PC-3 (cell line): ENCODE measurements at regions of chrX and their contacts with region 1.

Region 1: DNA sequence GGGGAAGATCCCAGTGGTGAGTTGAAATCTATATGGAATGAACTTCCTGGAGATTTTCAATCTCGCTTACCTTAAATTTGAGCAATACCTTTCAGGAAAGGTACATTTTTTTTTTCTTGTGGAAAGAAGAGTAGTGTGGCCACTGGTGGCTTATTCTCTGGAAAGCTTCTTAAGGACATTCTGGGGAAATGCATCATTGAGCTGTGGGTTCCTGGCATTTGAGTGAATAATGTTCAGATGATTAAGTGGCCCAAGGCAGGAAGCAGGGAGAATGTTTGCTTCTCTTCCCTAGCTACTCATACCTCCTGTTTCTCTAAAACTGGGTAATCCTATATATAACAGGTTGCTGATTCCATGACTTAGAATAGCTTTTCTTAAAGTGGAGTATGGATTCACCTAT is 31.8 kb downstream of the STAG2 start:
- DNase-seq: peak; percentile 76
- ATAC-seq: peak; percentile 81
- H3K4me3 ChIP-seq: no peak overlapping the region
- H3K27ac ChIP-seq: peak overlapping the region; percentile 55
- H3K4me1 ChIP-seq: peaks cover 29% of the 10 kb centered on the region
- H3K27me3 ChIP-seq: no peaks in the 10 kb centered on the region
- CTCF ChIP-seq: no peak

Region 2: DNA sequence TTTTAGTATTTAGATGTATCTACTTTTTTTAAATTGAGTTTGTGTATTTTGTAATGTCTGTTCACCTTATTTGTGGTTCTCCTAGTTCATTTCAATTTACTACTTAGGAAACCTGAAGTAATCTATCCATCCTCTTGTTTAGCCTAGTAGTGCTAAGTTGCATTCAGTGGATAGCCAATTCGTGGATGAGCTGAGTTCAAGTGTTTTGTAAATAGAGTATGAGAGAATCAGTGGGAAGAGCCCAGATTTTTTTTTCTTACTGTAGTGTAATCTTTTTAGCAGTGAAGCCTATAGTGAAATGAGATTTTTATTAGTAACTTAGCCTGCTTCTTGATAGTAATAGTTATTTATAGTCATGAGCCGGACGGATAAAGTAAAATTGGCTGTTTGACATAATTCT is 10.1 kb before region 1 on chrX:
- CTCF ChIA-PET with region 1: no interaction called
- POLR2A ChIA-PET with region 1: interaction called, 40 read pairs
- intact Hi-C with region 1: no loop called
- DNase-seq: no peak
- ATAC-seq: no peak
- H3K4me3 ChIP-seq: no peak overlapping the region
- H3K27ac ChIP-seq: no peak overlapping the region
- H3K4me1 ChIP-seq: peaks cover 12% of the 10 kb centered on the region
- H3K27me3 ChIP-seq: no peaks in the 10 kb centered on the region
- CTCF ChIP-seq: no peak

Region 3: DNA sequence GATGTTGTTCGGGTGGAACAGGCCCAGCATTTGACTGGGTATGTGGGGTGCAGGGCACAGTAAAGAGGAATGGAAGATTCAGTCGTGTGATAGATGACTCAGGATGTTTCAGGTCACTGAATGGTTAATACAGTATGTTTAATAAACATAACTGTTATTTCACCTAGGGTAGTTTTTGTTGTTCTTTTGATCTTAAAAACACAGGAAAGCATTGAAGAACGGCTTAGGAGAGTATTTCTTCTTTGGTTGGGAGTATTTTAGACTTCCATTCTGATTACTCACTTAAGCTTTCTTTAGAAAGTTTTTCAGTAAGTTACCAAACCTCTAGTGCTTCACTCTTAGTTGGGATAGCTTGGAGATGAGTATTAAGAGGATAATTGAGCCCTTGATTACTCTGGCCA is 30.5 kb after region 1 on chrX:
- CTCF ChIA-PET with region 1: no interaction called
- POLR2A ChIA-PET with region 1: interaction called, 3 read pairs
- intact Hi-C with region 1: loop called (anchors 5 kb)
- DNase-seq: no peak
- ATAC-seq: no peak
- H3K4me3 ChIP-seq: no peak overlapping the region
- H3K27ac ChIP-seq: peak overlapping the region; percentile 95
- H3K4me1 ChIP-seq: peaks cover 59% of the 10 kb centered on the region
- H3K27me3 ChIP-seq: no peaks in the 10 kb centered on the region
- CTCF ChIP-seq: no peak